SK-N-SH (cell line): ENCODE measurements at regions of chr6 and their contacts with region 1.

Region 1: GRCh38 chr6:97394160-97394748 is 111.2 kb upstream of the MMS22L start:
- DNase-seq: peak; percentile 52
- H3K4me3 ChIP-seq: peak overlapping the region in 1 of 2 experiments; percentile 41; a peak in 1 of 4 replicates
- H3K27ac ChIP-seq: no peak overlapping the region
- H3K4me1 ChIP-seq: no peaks in the 10 kb centered on the region; a peak in 1 of 4 replicates
- H3K27me3 ChIP-seq: no peaks in the 10 kb centered on the region
- CTCF ChIP-seq: peak; percentile 96
- EP300 ChIP-seq: no peak
- RAD21 ChIP-seq: peak; percentile 97

Region 2: DNA sequence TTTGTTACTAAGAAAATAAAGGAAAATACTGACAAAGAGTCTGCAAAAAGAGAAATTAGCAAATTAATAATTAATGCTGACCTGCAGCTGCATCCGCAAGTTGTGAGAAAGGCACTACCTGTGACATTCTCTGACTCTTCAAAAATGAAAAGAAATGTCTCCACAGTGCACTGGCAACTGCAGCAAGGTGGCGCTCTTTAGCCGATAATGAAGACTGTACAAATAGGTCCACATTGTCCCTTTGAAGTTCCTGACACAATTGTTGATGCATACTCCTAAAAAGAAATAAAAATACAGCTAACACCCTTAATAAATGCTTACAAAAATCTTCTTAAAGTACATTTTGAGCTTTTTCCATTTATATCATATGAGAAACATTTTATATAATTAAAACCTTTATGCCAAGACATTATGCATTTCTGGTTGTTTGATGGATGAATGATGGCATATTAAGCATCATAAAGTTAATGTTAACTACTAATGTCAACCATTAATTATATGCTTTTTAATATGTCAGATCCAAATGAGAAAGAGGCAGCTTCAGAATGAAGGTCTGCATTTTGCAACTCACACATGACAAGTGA is 207.7 kb before region 1 on chr6:
- CTCF ChIA-PET with region 1: interaction called, 23 read pairs
- POLR2A ChIA-PET with region 1: no interaction called
- DNase-seq: peak; percentile 40
- H3K4me3 ChIP-seq: no peak overlapping the region; a peak in 1 of 4 replicates
- H3K27ac ChIP-seq: no peak overlapping the region
- H3K4me1 ChIP-seq: peaks cover 5 to 18% of the 10 kb centered on the region in 2 experiments; a peak in 3 of 4 replicates
- H3K27me3 ChIP-seq: no peaks in the 10 kb centered on the region
- CTCF ChIP-seq: peak; percentile 98
- EP300 ChIP-seq: no peak
- RAD21 ChIP-seq: peak; percentile 97